Breast epithelium (tissue), 4 donors: ENCODE measurements at regions of chr17 and their contacts with region 1.

Region 1: DNA sequence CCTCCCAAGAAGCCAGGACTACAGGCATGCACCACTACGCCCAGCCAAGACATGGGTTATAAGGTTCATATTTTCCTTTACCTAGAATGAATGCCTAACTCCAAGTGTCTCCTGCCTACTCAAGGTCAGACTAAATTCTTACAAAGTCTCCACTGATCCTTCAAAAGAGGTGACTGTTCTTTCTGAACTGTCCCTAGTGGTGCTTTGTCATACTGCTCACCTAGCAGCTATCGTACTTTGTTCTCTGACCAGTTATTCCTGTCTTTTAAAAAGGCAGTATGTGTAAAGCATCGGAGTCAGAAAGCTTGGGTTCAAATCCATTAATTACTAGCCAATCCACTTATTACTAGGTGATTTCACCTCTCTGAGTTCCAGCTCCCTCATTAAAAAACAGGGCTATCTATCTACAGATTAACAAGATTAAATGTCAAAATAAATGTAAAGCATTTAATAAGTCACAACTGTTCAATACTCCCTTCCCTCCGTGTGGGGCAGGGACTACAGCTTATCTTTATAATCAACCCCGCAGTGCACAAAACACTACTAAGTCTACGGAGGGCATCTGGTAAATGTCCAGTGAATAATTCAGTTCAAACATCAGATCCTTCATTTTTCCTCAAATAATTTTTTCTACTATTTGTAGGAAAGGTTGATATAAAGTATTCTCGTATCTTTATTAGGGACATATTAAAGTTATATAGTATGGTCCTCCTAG is 20.0 kb upstream of the ITGA2B start:
- DNase-seq: no peak
- H3K4me3 ChIP-seq: no peak overlapping the region
- H3K27ac ChIP-seq: no peak overlapping the region
- H3K4me1 ChIP-seq: no peaks in the 10 kb centered on the region
- H3K27me3 ChIP-seq: no peaks in the 10 kb centered on the region
- CTCF ChIP-seq: peak in 1 of 3 donors; percentile 24
- POLR2A ChIP-seq: no peak

Region 2: GRCh38 chr17:45857977-45858709 is 1448.7 kb after region 1 on chr17:
- intact Hi-C with region 1: loop called (anchors 5 kb)
- DNase-seq: no peak
- H3K4me3 ChIP-seq: no peak overlapping the region
- H3K27ac ChIP-seq: no peak overlapping the region
- H3K4me1 ChIP-seq: no peaks in the 10 kb centered on the region
- H3K27me3 ChIP-seq: no peaks in the 10 kb centered on the region
- CTCF ChIP-seq: no peak
- POLR2A ChIP-seq: no peak